ENCODE measurements at regions of chr7 and their contacts with region 1.

Region 1: DNA sequence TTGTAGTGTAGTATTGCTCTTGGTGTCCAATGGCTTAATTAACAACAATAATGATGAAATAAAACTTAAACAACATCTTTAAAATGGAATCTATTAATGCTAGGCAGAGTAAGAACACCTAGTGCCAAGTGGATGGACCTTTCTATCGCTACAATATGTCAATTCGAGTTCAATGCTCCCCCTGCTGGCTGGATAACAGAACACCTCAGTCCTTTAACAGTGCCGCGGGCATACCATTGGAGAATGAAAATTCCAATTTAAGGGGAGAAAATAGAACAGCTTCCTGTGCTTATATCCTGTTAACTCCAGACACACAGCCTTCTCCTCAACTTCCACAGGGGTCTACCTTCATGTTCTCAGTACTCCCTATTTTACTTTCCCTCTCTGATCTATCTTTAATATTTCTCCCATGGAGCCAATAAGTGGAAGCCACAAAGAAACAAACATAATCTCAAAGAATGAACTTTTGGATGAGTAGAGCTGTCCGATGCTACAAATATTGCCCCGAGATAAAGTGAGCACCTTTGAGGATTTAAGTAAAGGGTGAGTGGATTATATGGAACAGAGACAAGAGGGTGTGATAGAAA is 41.4 kb downstream of the COL1A2 start:
- DNase-seq: no peak
- ATAC-seq: peak; percentile 71
- H3K4me3 Mint-ChIP-seq: no peak overlapping the region
- H3K27ac Mint-ChIP-seq: no peak overlapping the region
- H3K4me1 Mint-ChIP-seq: no peaks in the 10 kb centered on the region
- H3K27me3 Mint-ChIP-seq: peaks cover 13% of the 10 kb centered on the region
- CTCF ChIP-seq: peak; percentile 81

Region 2: GRCh38 chr7:93178212-93178611 is 1257.9 kb before region 1 on chr7:
- CTCF ChIA-PET with region 1: no interaction called
- POLR2A ChIA-PET with region 1: no interaction called
- intact Hi-C with region 1: loop called (anchors 5 kb)
- DNase-seq: no peak
- ATAC-seq: no peak
- H3K4me3 Mint-ChIP-seq: no peak overlapping the region
- H3K27ac Mint-ChIP-seq: no peak overlapping the region
- H3K4me1 Mint-ChIP-seq: no peaks in the 10 kb centered on the region
- H3K27me3 Mint-ChIP-seq: peaks cover 8% of the 10 kb centered on the region
- CTCF ChIP-seq: no peak

Region 3: DNA sequence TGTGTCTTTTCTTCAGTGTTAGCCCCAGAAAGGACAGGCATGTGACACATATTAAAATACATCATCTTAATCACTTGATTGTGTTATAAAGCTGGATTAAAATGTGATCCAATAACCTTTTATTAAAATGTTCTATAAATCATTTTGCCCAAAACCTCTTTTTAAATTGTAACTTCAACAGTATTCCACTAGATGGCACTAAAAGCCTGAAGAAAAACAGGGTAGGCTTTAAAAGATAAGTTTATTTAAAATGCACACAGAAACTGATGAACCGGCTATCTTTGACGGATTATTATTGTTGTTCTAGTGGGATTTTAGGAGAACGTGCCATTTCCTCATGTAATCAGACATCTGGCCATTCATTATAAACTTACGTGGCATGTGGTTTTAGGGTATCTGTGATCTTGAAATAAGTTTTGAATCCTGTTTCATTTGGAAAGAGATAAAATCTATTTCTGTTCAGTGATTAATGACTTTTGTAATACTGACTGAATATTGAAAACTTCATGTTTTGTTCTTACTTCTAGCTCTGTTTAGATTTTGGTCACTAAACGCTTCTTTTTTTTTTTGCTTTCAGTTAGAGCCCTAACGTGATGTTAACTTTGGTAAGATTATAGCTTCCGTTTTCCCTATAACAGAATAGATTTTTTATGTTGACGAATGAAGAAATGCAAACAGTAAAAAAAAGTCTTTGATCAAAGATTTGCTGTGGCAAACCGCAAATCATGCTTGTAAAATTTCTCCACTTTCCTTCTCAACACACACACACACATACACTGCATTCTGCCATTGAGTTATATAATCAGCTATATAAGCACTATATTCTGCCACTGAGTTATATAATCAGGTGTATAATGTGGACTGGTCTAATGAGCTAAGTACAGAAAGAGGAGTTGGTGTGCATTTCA is 1190.3 kb before region 1 on chr7:
- CTCF ChIA-PET with region 1: interaction called, 5 read pairs
- POLR2A ChIA-PET with region 1: no interaction called
- intact Hi-C with region 1: loop called (anchors 1 kb)
- DNase-seq: no peak
- ATAC-seq: peak; percentile 25
- H3K4me3 Mint-ChIP-seq: no peak overlapping the region
- H3K27ac Mint-ChIP-seq: no peak overlapping the region
- H3K4me1 Mint-ChIP-seq: peaks cover 2% of the 10 kb centered on the region
- H3K27me3 Mint-ChIP-seq: no peaks in the 10 kb centered on the region
- CTCF ChIP-seq: peak; percentile 42

Region 4: GRCh38 chr7:93715234-93715633 is 720.9 kb before region 1 on chr7:
- CTCF ChIA-PET with region 1: interaction called, 3 read pairs
- POLR2A ChIA-PET with region 1: no interaction called
- intact Hi-C with region 1: loop called (anchors 1 kb)
- DNase-seq: peak; percentile 14
- ATAC-seq: no peak
- H3K4me3 Mint-ChIP-seq: no peak overlapping the region
- H3K27ac Mint-ChIP-seq: no peak overlapping the region
- H3K4me1 Mint-ChIP-seq: no peaks in the 10 kb centered on the region
- H3K27me3 Mint-ChIP-seq: peaks cover 10% of the 10 kb centered on the region
- CTCF ChIP-seq: no peak

Region 5: GRCh38 chr7:93883078-93883916 is 552.8 kb before region 1 on chr7:
- CTCF ChIA-PET with region 1: no interaction called
- POLR2A ChIA-PET with region 1: no interaction called
- intact Hi-C with region 1: loop called (anchors 1 kb)
- DNase-seq: no peak
- ATAC-seq: no peak
- H3K4me3 Mint-ChIP-seq: no peak overlapping the region
- H3K27ac Mint-ChIP-seq: no peak overlapping the region
- H3K4me1 Mint-ChIP-seq: no peaks in the 10 kb centered on the region
- H3K27me3 Mint-ChIP-seq: peaks cover 5% of the 10 kb centered on the region
- CTCF ChIP-seq: no peak

Region 6: DNA sequence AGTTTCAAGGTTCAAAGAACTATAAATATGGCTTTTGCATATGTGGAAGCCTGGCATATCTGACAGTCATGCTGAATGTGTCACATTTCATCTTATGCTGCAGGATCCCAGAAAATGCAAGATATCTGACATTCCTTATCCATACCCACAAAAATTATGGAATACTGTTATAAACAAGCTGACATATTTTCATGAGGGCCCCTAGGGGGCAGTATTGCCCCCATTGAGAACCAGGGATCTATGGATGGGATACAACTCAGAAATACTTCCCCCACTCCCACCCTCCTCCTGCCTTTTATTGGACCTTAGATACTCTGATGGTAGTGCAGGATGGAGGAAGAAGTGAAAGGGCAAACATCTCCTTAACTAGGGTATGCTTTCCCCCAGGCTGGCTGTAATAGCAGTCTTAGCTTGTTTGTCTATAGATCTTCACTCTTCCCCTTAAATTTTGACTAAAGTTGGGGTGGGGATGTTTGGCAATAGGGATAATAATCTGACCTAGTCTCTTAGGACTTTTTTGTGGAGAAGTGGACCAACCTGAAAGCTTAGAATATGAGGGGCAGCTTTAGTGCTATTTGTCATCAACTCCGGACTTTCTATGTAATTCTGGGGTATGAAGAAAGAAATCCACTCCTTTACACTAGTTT is 533.2 kb before region 1 on chr7:
- CTCF ChIA-PET with region 1: interaction called, 3 read pairs
- POLR2A ChIA-PET with region 1: no interaction called
- intact Hi-C with region 1: loop called (anchors 5 kb)
- DNase-seq: no peak
- ATAC-seq: no peak
- H3K4me3 Mint-ChIP-seq: no peak overlapping the region
- H3K27ac Mint-ChIP-seq: no peak overlapping the region
- H3K4me1 Mint-ChIP-seq: no peaks in the 10 kb centered on the region
- H3K27me3 Mint-ChIP-seq: peaks cover 17% of the 10 kb centered on the region
- CTCF ChIP-seq: peak; percentile 74

Region 7: DNA sequence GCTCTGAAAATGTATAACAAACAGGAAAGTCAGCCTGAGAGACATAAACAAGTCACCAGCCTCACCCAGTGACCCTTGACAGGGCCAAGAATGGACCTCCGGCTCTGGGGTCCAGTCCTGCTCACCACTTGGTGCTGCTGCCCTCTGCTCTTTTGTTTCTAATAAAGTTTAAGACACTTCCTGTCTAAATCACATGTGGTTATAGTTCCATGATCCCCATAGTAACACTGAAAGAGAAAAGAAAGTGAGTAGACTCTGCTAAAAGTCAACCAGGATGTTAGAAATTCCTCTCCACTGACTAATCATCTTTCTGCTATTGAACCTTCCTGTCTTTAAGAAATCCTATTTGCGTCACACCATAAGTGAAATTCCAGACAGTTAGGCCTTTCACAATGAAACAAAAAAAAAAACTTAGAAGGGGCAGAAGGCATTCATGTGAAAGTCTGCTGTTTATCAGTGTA is 252.8 kb before region 1 on chr7:
- CTCF ChIA-PET with region 1: no interaction called
- POLR2A ChIA-PET with region 1: no interaction called
- intact Hi-C with region 1: no loop called
- DNase-seq: no peak
- ATAC-seq: no peak
- H3K4me3 Mint-ChIP-seq: no peak overlapping the region
- H3K27ac Mint-ChIP-seq: no peak overlapping the region
- H3K4me1 Mint-ChIP-seq: peaks cover 8% of the 10 kb centered on the region
- H3K27me3 Mint-ChIP-seq: no peaks in the 10 kb centered on the region
- CTCF ChIP-seq: no peak

Measured in activated B cell treated with CpG ODN at 0.5 μM for 24 hours (primary cell).